GM13977 (cell line): ENCODE measurements at regions of chr5 and their contacts with region 1.

Region 1: GRCh38 chr5:131165119-131165727 is at the start of gene HINT1:
- DNase-seq: peak; percentile 96
- CTCF ChIP-seq: peak; percentile 56

Region 2: DNA sequence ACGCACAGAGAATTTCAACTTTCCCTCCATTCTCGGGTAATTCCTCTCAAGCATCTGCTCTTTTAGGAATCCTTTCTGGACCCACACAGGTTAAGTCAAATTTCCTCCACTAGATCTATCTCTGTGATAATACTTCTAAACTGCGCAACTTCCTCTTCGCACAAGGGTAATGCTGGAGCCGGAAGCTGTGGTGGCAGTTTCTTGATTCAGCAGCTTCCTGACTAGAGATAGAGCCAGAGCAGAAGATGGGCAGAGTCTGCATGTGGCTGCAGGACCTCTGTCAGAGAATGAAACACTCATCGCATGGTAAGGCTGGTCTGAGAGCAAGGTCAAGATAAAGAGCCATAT is 87.6 kb after region 1 on chr5:
- in situ Hi-C with region 1: loop called (anchors 10 kb)
- DNase-seq: peak; percentile 54
- CTCF ChIP-seq: no peak